Brain microvascular endothelial cell (primary cell): ENCODE measurements at regions of chr3 and their contacts with region 1.

Region 1: DNA sequence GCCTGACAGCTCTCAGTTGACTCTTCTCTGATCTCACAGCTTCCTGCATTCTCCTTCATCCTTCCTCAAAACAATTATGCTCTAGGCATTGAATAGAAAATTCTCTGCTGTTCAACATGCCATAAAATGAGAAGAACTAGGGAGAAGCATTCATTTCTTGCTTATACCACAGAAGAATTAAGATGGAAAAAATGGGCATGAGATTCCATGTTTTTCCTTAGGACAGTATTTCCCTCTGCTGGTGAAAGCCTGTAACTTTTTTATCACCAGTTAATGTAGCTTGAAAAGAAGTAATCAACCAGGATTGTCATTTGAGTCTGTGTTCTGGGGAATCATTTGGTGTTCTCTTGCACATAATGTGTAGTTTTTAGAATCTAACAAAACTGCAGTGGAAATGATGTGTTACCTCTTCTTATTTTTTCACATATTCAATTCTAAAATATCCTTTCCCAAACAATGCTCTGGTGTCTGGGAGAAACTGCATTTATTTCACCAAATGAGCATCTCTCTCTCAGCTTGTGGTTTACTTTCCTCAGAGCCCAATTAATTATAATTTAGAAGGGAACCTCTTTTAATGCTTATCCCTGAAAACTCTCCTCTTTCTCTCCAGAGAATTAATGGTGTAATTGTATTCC is 92.8 kb upstream of the DCBLD2 start:
- DNase-seq: peak; percentile 34
- H3K4me3 ChIP-seq: no peak overlapping the region
- H3K27ac ChIP-seq: no peak overlapping the region
- H3K27me3 ChIP-seq: no peaks in the 10 kb centered on the region
- CTCF ChIP-seq: peak; percentile 34

Region 2: DNA sequence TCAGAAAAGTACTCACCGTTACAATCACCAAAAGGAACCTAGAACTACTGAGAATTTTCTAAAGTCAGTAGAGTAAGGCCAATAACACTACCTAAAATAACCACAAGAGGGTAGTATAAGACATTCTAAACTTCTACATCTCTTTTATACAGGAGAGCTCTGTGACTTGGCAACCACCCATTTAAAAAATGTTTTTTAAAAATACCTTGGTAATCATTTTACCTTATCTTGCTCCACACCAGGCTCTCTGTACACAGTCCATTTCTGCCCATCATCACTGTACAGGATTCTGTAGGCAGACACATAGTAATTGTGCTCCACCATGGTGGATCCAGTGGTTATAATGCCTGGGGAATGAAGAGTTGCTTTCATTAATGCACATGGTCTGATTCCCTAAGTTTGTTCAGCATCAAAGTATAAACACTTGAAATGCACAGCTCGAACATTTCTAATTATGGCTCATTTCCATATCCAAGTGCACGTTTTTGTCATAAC is 176.7 kb before region 1 on chr3:
- in situ Hi-C with region 1: loop called (anchors 25 kb)
- DNase-seq: no peak
- H3K4me3 ChIP-seq: no peak overlapping the region
- H3K27ac ChIP-seq: no peak overlapping the region
- H3K27me3 ChIP-seq: no peaks in the 10 kb centered on the region
- CTCF ChIP-seq: peak; percentile 34

Region 3: DNA sequence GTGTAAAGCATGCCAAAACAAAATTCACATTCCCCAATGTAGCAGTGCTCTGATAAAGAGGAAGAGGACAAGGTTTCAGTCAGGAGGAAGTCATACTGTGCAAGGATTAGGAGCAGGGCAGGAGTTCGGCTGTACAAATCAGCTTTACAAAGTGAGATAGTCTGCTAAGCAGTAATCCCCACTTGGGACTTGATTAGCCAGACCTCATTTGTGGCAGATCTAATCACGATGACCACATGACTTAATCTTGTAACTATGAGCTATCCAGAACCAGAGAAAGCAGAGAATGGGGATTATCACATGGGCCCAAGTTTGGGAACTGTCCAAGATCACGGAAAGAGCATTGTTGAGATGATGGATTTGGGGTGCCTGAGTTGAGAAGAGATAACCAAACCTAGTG is 100.5 kb before region 1 on chr3:
- in situ Hi-C with region 1: loop called (anchors 25 kb)
- DNase-seq: no peak
- H3K4me3 ChIP-seq: peak overlapping the region; percentile 31
- H3K27ac ChIP-seq: no peak overlapping the region
- H3K27me3 ChIP-seq: no peaks in the 10 kb centered on the region
- CTCF ChIP-seq: no peak

Region 4: DNA sequence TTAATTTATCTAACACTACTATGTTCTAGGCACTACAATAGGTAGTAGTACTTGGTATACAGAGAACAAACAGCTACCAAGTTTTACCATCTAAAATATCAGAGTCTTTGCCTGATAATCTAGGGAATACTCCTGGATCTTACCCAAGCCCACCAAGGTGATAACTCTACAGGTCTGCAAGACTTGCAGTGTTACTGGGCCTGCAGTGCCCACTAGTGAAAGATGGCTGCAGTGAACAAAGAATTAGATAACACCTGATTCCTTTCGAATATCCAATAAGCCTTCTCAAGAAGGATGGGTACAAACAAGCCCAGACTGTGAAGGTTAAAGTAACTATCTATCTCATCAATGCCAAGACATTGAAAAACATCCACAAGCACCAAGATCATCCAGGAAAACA is 224.2 kb after region 1 on chr3:
- in situ Hi-C with region 1: no loop called
- DNase-seq: no peak
- H3K4me3 ChIP-seq: no peak overlapping the region
- H3K27ac ChIP-seq: no peak overlapping the region
- H3K27me3 ChIP-seq: no peaks in the 10 kb centered on the region
- CTCF ChIP-seq: no peak